Ascending aorta (tissue), 2 donors: ENCODE measurements at regions of chr1 and their contacts with region 1.

Region 1: DNA sequence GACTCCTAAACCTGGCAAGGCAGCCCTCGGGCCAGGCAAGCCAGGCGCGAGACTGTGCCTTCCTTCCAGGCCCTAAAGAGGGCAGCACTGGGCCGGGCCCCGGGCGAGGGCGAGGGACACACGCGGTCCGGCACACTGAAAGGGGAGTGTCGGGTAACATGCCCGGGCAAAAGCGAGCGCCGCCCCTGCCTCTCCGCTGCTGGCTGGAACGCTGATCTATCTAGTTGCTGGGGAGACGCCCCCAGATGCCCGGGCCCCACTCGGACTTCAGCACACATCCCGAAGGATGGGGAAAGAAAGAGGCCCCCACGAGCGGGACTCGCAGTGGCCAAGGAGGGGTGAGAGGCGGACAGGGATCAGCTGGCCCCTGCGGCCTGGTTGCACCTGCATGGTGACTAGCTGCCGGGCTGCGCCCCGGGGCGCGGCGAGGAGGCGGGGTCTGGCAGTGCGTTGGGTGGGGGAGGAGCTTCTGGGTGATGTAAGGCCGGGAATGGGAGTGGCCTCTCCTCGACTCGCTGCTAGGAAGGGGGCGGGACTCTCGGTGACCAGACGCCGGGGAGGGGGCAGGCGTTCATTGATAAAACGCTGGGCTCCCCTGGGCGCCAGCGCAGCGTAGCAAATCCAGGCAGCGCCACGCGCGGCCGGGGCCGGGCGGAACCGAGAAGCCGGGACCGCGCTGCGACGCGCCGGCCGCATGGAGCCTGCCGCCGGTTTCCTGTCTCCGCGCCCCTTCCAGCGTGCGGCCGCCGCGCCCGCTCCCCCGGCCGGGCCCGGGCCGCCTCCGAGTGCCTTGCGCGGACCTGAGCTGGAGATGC is at the start of gene PLK3:
- DNase-seq: peak; percentile 94 to 99
- H3K4me3 ChIP-seq: peak within 1 kb of the TSS; percentile 85 to 91
- H3K27ac ChIP-seq: peak within 1 kb of the TSS; percentile 96 to 99
- H3K4me1 ChIP-seq: peaks cover 18 to 32% of the 10 kb centered on the region in 2 donors
- H3K27me3 ChIP-seq: no peaks in the 10 kb centered on the region
- CTCF ChIP-seq: peak; percentile 92 to 95 (median 94)
- total RNA-seq, gene PLK3: 107 TPM

Region 2: GRCh38 chr1:44347280-44347679 is 452.7 kb before region 1 on chr1:
- intact Hi-C with region 1: loop called (anchors 10 kb)
- DNase-seq: peak in 1 of 2 donors; percentile 73
- H3K4me3 ChIP-seq: no peak overlapping the region
- H3K27ac ChIP-seq: peak overlapping the region; percentile 84
- H3K4me1 ChIP-seq: peaks cover 9 to 25% of the 10 kb centered on the region in 2 donors
- H3K27me3 ChIP-seq: no peaks in the 10 kb centered on the region
- CTCF ChIP-seq: peak in 1 of 3 experiments; percentile 12

Region 3: GRCh38 chr1:44576456-44577150 is 223.4 kb before region 1 on chr1:
- intact Hi-C with region 1: no loop called
- DNase-seq: no peak
- H3K4me3 ChIP-seq: no peak overlapping the region
- H3K27ac ChIP-seq: no peak overlapping the region
- H3K4me1 ChIP-seq: no peaks in the 10 kb centered on the region
- H3K27me3 ChIP-seq: no peaks in the 10 kb centered on the region
- CTCF ChIP-seq: no peak

Region 4: DNA sequence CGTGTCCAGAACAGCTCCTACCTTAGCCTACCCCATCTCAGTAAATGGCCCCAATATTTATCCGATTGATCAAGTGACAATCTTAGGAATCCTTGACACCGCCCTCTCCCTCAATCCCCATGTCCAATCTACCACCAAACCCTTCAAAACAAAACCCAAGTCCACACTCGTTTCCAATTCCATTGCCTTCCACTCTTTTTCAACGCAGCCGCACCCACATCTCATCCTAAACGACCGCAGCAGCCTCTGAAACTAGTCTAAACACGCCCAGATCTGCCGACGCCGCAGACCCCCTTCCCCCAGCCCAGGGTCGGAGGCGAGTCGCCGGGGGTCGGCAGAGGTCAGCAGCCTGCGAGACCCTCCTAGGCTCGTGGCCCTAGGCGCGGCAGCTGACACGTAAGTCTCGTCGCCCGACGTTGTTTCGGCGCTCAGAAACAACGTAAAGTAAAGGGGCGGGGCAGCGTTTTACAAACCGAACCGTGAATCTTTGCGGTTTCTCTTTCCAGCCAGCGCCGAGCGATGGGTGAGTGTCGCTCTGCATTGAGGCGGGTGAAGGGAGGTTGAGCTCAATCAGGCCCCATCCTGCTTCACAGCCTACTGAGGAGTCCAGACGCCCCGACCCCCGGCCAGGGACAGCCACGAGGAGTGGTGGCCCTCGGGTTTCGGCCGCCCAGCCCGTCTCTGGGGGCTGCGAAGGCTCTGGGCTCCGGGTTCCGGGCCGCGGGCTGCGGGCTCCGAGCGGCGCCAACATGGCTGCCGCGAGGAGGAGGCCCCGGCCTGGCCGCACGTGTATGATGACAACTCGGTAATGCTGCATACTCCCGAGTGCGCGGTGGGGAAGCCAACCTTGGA is 24.7 kb before region 1 on chr1 and contains the start of gene RPS8:
- intact Hi-C with region 1: loop called (anchors 2 kb)
- DNase-seq: peak; percentile 56 to 96
- H3K4me3 ChIP-seq: peak within 1 kb of the TSS; percentile 60 to 78
- H3K27ac ChIP-seq: peak within 1 kb of the TSS; percentile 89 to 93
- H3K4me1 ChIP-seq: peaks cover 8 to 9% of the 10 kb centered on the region in 2 donors
- H3K27me3 ChIP-seq: no peaks in the 10 kb centered on the region
- CTCF ChIP-seq: no peak
- total RNA-seq, gene RPS8: 1,693 TPM

Region 5: DNA sequence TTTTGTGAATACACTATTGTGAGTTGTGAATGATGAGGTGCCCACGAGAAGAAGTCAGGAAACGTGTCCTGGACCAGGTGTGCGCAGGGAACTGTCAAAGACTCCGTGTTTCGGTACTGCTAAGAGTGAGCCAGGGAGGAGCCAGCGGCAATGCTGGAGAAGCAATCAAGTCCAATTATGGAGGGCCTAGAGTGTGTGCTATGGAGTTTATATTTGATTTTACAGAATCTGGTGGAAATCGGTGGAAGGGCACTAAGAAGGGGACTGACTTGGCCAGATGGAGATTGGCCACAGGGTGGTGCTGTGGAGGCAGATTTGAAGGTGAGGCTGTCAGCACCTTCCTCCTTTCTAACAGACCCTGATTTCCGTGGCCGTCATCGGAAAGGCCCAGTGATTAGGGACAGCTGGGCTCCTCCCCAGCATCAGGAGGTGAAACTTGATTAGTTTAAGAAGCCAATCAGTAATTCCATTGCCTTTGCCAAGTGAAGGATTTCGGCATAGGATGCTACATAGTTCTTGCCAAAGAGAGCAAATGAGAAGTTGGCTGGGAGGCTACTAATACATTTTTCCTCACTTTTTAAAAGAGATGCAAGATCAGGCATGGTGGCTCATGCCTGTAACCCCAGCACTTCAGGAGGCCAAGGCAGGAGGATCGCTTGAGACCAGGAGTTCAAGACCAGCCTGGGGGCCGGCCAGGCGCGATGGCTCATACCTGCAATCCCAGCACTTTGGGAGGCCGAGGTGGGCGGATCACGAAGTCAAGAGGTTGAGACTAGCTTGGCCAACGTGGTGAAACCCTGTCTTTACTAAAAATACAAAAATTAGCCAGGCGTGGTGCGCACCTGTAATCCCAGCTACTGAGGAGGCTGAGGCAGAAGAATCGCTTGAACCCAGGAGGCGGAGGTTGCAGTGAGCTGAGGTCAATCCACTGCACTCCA is 36.0 kb after region 1 on chr1:
- intact Hi-C with region 1: loop called (anchors 2 kb)
- DNase-seq: peak in 1 of 2 donors; percentile 91
- H3K4me3 ChIP-seq: no peak overlapping the region
- H3K27ac ChIP-seq: no peak overlapping the region
- H3K4me1 ChIP-seq: no peaks in the 10 kb centered on the region
- H3K27me3 ChIP-seq: no peaks in the 10 kb centered on the region
- CTCF ChIP-seq: peak; percentile 73 to 80 (median 75)

Region 6: GRCh38 chr1:44985747-44986359 is 185.9 kb after region 1 on chr1:
- intact Hi-C with region 1: loop called (anchors 2 kb)
- DNase-seq: no peak
- H3K4me3 ChIP-seq: peak overlapping the region; percentile 81 to 90
- H3K27ac ChIP-seq: peak overlapping the region; percentile 50 to 54
- H3K4me1 ChIP-seq: peaks cover 5 to 25% of the 10 kb centered on the region in 2 donors
- H3K27me3 ChIP-seq: no peaks in the 10 kb centered on the region
- CTCF ChIP-seq: no peak